Gastrocnemius medialis (tissue), 4 donors: ENCODE measurements at regions of chr6 and their contacts with region 1.

Region 1: DNA sequence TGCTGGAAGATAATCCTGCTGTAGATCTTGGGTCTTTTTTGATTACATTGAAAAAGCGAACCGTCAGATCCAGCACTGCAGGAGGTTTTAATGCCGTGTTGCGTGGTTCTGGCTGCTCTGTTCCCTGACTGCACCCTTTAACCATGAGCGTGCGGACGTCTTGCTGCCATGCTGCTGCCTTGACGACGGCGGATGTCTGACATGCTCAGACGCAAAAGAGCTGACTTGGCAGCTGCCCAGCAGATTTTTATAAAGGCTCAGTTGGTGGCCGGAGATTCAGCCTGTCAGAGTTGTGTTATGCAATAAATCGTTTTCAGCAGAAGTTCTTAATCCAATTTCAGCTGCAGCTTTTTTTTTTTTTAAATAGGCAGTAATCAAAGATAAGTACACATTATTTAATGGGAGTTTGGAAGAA is 119.4 kb downstream of the JARID2 start:
- DNase-seq: peak; percentile 71 to 81
- ATAC-seq: peak; percentile 64 to 69
- H3K4me3 ChIP-seq: peak overlapping the region in 3 of 4 donors; percentile 12 to 34 (median 17)
- H3K27ac ChIP-seq: peak overlapping the region; percentile 62 to 73 (median 67)
- H3K4me1 ChIP-seq: peaks cover 80 to 86% of the 10 kb centered on the region in 2 donors
- H3K27me3 ChIP-seq: no peaks in the 10 kb centered on the region
- CTCF ChIP-seq: no peak
- POLR2A ChIP-seq: no peak

Region 2: GRCh38 chr6:15171026-15171425 is 194.3 kb before region 1 on chr6:
- in situ Hi-C with region 1: no loop called
- intact Hi-C with region 1: no loop called
- DNase-seq: no peak
- ATAC-seq: no peak
- H3K4me3 ChIP-seq: no peak overlapping the region
- H3K27ac ChIP-seq: no peak overlapping the region
- H3K4me1 ChIP-seq: no peaks in the 10 kb centered on the region
- H3K27me3 ChIP-seq: no peaks in the 10 kb centered on the region
- CTCF ChIP-seq: no peak
- POLR2A ChIP-seq: no peak

Region 3: DNA sequence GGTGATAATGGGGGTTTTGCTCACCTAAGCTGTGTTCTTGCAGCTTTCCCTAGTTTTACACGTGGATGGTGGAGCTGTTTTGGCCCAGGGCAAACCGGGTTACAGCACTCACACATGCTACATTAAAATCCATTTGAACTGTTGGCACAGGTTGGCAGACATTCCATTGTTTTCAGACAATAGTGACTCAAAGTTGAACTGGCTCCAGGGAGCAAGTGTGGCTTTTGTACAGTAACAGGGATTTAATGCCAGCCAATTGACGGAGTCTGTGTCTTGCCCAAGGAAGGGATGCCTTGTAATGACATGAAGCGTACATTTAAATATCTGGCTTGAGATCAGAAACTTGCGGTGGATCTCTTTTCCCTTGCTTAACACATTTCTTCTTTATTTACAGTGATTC is 114.5 kb after region 1 on chr6:
- in situ Hi-C with region 1: no loop called
- intact Hi-C with region 1: loop called (anchors 5 kb)
- DNase-seq: no peak
- ATAC-seq: no peak
- H3K4me3 ChIP-seq: no peak overlapping the region
- H3K27ac ChIP-seq: peak overlapping the region; percentile 75 to 87 (median 83)
- H3K4me1 ChIP-seq: peaks cover 82 to 92% of the 10 kb centered on the region in 2 donors
- H3K27me3 ChIP-seq: no peaks in the 10 kb centered on the region
- CTCF ChIP-seq: no peak
- POLR2A ChIP-seq: no peak

Region 4: GRCh38 chr6:15491255-15491985 is 126.1 kb after region 1 on chr6:
- in situ Hi-C with region 1: no loop called
- intact Hi-C with region 1: no loop called
- DNase-seq: peak; percentile 59 to 77
- ATAC-seq: peak; percentile 42 to 56
- H3K4me3 ChIP-seq: no peak overlapping the region
- H3K27ac ChIP-seq: peak overlapping the region; percentile 55 to 73 (median 69)
- H3K4me1 ChIP-seq: peaks cover 38 to 45% of the 10 kb centered on the region in 2 donors
- H3K27me3 ChIP-seq: no peaks in the 10 kb centered on the region
- CTCF ChIP-seq: peak; percentile 86 to 94 (median 93)
- POLR2A ChIP-seq: no peak

Region 5: GRCh38 chr6:15962449-15962764 is 597.1 kb after region 1 on chr6:
- in situ Hi-C with region 1: no loop called
- intact Hi-C with region 1: no loop called
- DNase-seq: no peak
- ATAC-seq: no peak
- H3K4me3 ChIP-seq: no peak overlapping the region
- H3K27ac ChIP-seq: no peak overlapping the region
- H3K4me1 ChIP-seq: no peaks in the 10 kb centered on the region
- H3K27me3 ChIP-seq: no peaks in the 10 kb centered on the region
- CTCF ChIP-seq: no peak
- POLR2A ChIP-seq: no peak